ENCODE measurements at regions of chr7 and their contacts with region 1.

Region 1: DNA sequence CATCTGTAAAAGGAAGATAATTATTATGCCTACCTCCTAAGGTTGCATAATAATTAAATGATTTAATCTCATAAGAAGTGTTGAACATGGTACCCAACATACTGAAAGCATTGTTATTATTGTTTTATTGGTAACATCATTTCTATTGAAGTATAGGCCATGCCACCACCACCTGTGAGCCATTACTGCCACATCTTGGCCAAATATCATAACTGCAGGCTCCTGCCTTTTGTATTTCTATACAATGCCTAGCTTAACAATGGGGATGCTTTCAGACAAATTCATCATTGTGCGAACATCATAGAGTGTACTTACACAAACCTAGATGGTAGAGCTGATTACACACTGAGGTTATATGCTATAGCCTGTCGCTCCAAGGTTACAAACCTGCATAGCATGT is 61.1 kb upstream of the NPSR1 start:
- DNase-seq: peak; percentile 15
- ATAC-seq: peak; percentile 66
- H3K4me3 ChIP-seq: no peak overlapping the region
- H3K27ac ChIP-seq: no peak overlapping the region
- H3K4me1 ChIP-seq: no peaks in the 10 kb centered on the region
- H3K27me3 ChIP-seq: no peaks in the 10 kb centered on the region
- CTCF ChIP-seq: peak; percentile 58
- EP300 ChIP-seq: no peak
- POLR2A ChIP-seq: no peak
- RAD21 ChIP-seq: no peak

Region 2: DNA sequence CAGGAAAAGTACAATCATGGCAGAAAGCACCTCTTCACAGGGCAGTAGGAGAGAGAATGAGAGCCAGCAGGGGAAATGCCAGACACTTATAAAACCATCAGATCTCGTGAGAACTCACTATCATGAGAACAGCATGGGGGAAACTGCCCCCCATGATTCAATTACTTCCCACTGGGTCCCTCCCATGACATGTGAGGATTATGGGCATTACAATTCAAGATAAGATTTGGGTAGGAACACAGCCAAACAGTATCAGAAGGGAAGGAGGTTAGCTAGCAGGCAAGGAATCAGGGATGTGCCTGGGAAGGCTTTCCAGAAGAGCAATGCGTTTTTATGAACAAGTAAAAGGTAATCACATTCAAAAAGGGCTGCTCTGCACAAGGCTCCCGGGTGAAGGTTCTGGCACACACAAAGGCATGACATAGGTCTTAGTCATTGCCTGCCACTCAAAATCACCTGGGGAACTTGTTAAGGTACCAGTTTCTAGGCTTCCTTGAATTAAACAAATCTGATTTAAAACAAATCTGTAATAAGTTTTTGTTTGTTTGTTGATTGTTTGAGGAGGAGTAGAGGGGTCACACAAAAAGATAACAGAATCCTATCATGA is 650.7 kb before region 1 on chr7:
- CTCF ChIA-PET with region 1: no interaction called
- POLR2A ChIA-PET with region 1: no interaction called
- in situ Hi-C with region 1: no loop called
- intact Hi-C with region 1: no loop called
- DNase-seq: no peak
- ATAC-seq: no peak
- H3K4me3 ChIP-seq: no peak overlapping the region
- H3K27ac ChIP-seq: no peak overlapping the region
- H3K4me1 ChIP-seq: no peaks in the 10 kb centered on the region
- H3K27me3 ChIP-seq: no peaks in the 10 kb centered on the region; a peak in 3 of 5 replicates
- CTCF ChIP-seq: no peak
- EP300 ChIP-seq: no peak
- POLR2A ChIP-seq: no peak
- RAD21 ChIP-seq: no peak

Region 3: DNA sequence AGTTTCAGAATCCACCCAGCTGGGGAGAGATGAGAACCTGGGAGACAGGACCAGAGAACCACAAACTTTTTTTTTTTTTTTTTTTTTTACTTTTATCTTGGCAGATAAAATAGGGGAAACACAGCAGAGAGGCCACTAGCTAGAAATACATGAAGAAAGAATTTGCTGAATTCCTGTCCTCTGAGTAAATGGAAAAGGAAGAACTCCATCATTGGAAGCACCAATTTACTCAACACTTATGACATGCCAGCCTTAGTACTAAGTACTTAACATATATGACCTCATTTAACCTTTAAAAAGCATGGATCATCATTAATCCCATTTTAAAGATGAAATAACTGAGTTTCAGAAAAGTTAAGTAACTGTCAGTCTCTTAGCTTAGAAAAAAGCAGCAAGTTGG is 281.9 kb before region 1 on chr7:
- CTCF ChIA-PET with region 1: no interaction called
- POLR2A ChIA-PET with region 1: no interaction called
- in situ Hi-C with region 1: loop called (anchors 5 kb)
- intact Hi-C with region 1: no loop called
- DNase-seq: no peak
- ATAC-seq: no peak
- H3K4me3 ChIP-seq: no peak overlapping the region
- H3K27ac ChIP-seq: no peak overlapping the region
- H3K4me1 ChIP-seq: no peaks in the 10 kb centered on the region; the same call in 1 of the 2 replicates
- H3K27me3 ChIP-seq: 0 out of 5 replicates have a peak, but pooled peaks cover 0 to 3% of the 10 kb centered on the region in 2 experiments
- CTCF ChIP-seq: no peak
- EP300 ChIP-seq: no peak
- POLR2A ChIP-seq: no peak
- RAD21 ChIP-seq: no peak

Region 4: GRCh38 chr7:34584526-34584925 is 12.4 kb before region 1 on chr7:
- CTCF ChIA-PET with region 1: no interaction called
- POLR2A ChIA-PET with region 1: no interaction called
- in situ Hi-C with region 1: no loop called
- intact Hi-C with region 1: no loop called
- DNase-seq: no peak
- ATAC-seq: no peak
- H3K4me3 ChIP-seq: no peak overlapping the region
- H3K27ac ChIP-seq: no peak overlapping the region
- H3K4me1 ChIP-seq: peaks cover 6% of the 10 kb centered on the region
- H3K27me3 ChIP-seq: no peaks in the 10 kb centered on the region
- CTCF ChIP-seq: no peak
- EP300 ChIP-seq: no peak
- POLR2A ChIP-seq: no peak
- RAD21 ChIP-seq: no peak

Region 5: DNA sequence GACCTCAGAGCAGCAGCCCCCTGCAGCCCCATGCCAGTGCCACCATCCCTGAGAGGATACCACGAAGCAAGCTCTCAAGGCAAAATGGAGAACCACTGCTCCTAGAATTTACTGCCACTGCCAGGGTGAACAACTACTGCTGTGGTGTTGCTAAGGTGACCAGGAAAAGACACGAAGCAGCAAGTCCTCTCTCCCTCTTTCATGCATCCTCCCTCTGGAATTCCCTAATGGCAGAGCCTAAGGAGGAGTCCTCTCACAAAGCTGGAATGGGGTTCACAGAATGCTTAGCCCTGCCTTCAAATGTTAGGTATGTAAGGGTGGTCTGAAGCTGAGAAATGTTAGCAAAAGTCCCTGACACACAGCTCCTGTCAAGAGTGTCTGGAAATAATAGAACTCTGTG is 25.3 kb after region 1 on chr7:
- CTCF ChIA-PET with region 1: no interaction called
- POLR2A ChIA-PET with region 1: no interaction called
- in situ Hi-C with region 1: no loop called
- intact Hi-C with region 1: no loop called
- DNase-seq: no peak
- ATAC-seq: no peak
- H3K4me3 ChIP-seq: no peak overlapping the region
- H3K27ac ChIP-seq: no peak overlapping the region
- H3K4me1 ChIP-seq: peaks cover 6% of the 10 kb centered on the region; the same call in 1 of the 2 replicates
- H3K27me3 ChIP-seq: no peaks in the 10 kb centered on the region
- CTCF ChIP-seq: no peak
- EP300 ChIP-seq: no peak
- POLR2A ChIP-seq: no peak
- RAD21 ChIP-seq: no peak

Measured in HepG2 (cell line).